ENCODE measurements at regions of chr13 and their contacts with region 1.

Region 1: DNA sequence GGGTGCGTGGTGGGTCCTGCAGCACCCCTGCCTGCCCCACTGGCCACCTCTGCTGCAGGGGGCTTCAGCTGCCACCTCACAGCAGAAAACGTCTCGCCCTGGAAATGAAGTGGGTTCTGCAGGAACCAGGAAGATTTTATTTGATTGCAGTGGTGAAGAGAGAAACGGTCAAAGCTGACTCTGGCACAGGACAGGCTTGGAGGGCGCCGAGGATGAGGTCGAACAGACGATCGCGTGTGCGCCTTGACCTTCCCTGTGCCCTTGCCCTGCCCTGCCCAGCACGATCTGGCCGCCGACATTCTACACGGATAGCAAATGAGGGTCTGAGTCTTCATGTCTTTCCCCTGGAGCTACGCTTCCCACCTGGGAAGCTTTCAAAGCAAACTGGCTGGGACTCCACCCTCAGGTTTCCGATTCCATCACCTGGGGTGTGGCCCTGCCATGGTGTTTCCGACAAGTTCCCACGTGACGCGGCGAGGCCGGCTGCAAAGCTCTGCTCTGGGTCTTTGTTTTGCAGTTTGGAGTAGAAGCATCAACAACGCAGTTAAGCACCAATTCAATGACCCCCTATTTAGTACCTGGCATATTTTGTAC is 50.3 kb upstream of the TUBGCP3 start:
- DNase-seq: no peak
- H3K4me3 ChIP-seq: no peak overlapping the region
- H3K27ac ChIP-seq: no peak overlapping the region
- H3K4me1 ChIP-seq: peaks cover 0 to 9% (median 0%) of the 10 kb centered on the region in 4 donors
- H3K27me3 ChIP-seq: peaks cover 55% of the 10 kb centered on the region
- CTCF ChIP-seq: no peak
- EP300 ChIP-seq: no peak
- POLR2A ChIP-seq: no peak

Region 2: DNA sequence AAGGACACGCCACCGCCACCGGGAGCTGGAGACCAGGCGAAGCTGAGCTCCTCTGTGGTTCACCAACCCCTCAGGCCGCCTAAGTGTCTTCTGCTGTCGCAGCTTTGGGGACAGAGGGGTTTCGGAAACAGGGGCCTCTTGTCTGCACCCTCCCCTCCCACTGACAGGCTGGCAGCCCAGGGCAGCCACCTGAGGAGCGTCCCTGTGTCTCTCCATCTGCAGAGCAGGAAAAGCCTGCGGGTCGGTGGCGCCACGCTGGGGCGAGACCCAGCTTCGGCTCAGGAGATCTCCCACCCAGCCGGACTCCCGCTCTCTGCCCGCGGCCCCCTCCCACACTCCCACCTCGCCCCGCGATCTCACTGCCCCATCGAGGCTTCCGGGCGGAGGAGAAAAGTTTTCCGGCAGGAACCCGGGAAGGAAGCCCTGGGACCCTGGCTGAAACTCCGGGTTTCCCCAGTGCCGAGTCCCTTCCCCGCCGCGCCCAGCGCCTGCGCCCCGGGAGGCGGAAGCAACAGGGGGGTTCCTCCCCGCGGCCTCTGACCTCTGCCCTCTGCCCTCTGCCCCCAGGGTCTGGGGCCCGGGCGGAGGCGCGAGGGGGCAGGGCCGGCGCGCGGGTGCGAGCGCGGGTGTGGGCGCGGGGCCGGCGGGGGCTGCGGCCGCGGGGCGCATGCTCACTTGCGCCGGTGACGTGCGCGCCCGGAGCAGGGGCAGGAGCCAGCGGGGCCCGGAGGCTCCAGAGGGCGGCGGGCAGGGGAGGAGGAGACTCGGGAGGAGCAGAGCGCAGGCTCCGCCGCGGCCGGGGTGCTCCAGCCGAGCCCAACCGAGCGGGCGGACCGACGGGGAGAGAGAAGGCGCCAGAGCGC is 51.3 kb after region 1 on chr13 and contains the start of gene ATP11A:
- in situ Hi-C with region 1: loop called in 1 of 4 experiments (anchors 10 kb)
- intact Hi-C with region 1: no loop called
- DNase-seq: peak; percentile 91
- H3K4me3 ChIP-seq: peak within 1 kb of the TSS; percentile 80 to 88 (median 82)
- H3K27ac ChIP-seq: peak within 1 kb of the TSS; percentile 88 to 95 (median 90)
- H3K4me1 ChIP-seq: peaks cover 6 to 37% (median 19%) of the 10 kb centered on the region in 4 donors
- H3K27me3 ChIP-seq: no peaks in the 10 kb centered on the region
- CTCF ChIP-seq: no peak
- EP300 ChIP-seq: no peak
- POLR2A ChIP-seq: peak; percentile 46
- total RNA-seq, gene ATP11A: 10.2 to 17.5 (median 13.3) TPM

Region 3: DNA sequence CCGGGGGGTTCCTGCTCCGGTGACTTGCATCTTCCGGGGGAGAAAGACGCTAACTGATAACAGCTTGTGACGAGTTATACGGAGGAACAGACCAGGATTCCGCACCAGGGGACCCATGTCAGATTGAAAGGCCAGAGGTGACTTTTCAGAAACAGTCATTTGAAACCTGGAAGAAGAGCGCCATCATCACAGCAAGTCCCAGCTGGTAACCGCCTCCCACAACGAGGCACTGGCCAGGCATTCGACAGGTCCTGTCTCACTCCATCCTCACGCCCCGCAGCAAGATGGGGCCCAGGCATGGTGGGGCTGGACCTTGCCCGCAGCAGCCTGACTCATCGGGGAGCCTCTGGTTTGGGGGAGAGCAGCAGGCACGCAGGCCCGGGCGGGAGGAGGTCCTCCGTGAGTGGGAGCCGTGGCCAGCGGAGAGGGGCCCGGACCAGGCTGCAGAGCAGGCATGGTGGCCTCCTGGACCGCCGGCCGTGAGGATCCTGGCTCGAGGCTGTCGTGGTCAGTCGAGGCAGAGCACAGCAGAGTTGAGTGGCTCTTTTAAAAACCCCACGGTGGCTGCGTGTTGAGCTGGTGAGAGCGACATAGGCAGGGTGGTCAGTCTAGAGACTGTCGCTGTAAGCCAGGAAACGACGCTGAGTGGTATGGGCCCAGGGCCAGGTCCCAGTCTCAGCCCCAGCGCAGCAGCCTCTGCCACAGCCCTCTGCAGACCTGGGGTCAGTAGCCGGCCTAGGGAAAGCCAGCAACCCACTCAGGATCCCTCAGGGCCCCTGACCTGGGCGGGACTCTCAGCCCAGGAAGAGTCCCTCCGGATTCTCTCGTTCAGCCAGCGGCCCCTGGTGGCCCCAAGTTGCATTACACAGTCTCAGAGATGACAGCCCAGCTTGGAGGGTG is 235.8 kb after region 1 on chr13:
- in situ Hi-C with region 1: loop called (anchors 25 kb)
- intact Hi-C with region 1: no loop called
- DNase-seq: peak; percentile 74
- H3K4me3 ChIP-seq: no peak overlapping the region
- H3K27ac ChIP-seq: peak overlapping the region in 2 of 4 donors; percentile 13 to 17
- H3K4me1 ChIP-seq: peaks cover 0 to 7% (median 2%) of the 10 kb centered on the region in 4 donors
- H3K27me3 ChIP-seq: no peaks in the 10 kb centered on the region
- CTCF ChIP-seq: peak; percentile 75 to 89 (median 84)
- EP300 ChIP-seq: no peak
- POLR2A ChIP-seq: no peak